ENCODE measurements at regions of chr4 and their contacts with region 1.

Region 1: GRCh38 chr4:94115687-94116086 is 92.0 kb upstream of the SMARCAD1 start:
- DNase-seq: no peak
- H3K4me3 ChIP-seq: no peak overlapping the region
- H3K4me3 Mint-ChIP-seq: no peak overlapping the region
- H3K27ac Mint-ChIP-seq: no peak overlapping the region
- H3K4me1 ChIP-seq: no peaks in the 10 kb centered on the region
- H3K4me1 Mint-ChIP-seq: no peaks in the 10 kb centered on the region
- H3K27me3 ChIP-seq: no peaks in the 10 kb centered on the region
- H3K27me3 Mint-ChIP-seq: peaks cover 4% of the 10 kb centered on the region
- CTCF ChIP-seq: no peak

Region 2: DNA sequence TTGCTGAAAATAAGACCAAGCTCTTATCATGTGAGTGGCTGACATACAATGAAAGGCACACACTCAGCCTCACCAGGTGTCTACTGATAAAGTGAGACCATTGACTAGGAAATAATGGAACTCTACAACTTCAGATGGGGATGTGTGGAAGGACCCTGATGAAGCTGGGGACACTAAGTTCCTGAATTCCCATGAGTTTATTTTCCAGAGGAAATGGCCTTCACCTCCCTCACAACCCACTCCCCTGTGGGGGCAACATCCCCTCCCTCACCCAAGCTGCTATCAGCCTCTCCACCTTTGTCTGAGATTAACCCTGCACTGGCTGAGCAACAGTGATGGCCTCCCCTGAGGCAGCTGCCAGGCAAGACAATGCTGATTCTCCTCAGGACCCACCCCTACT is 36.8 kb after region 1 on chr4:
- CTCF ChIA-PET with region 1: no interaction called
- POLR2A ChIA-PET with region 1: interaction called, 10 read pairs
- intact Hi-C with region 1: no loop called
- DNase-seq: no peak
- H3K4me3 ChIP-seq: no peak overlapping the region
- H3K4me3 Mint-ChIP-seq: no peak overlapping the region
- H3K27ac Mint-ChIP-seq: no peak overlapping the region
- H3K4me1 ChIP-seq: no peaks in the 10 kb centered on the region
- H3K4me1 Mint-ChIP-seq: no peaks in the 10 kb centered on the region
- H3K27me3 ChIP-seq: no peaks in the 10 kb centered on the region
- H3K27me3 Mint-ChIP-seq: no peaks in the 10 kb centered on the region
- CTCF ChIP-seq: no peak

Region 3: GRCh38 chr4:94488662-94489061 is 373.0 kb after region 1 on chr4:
- CTCF ChIA-PET with region 1: no interaction called
- POLR2A ChIA-PET with region 1: no interaction called
- intact Hi-C with region 1: no loop called
- DNase-seq: no peak
- H3K4me3 ChIP-seq: no peak overlapping the region
- H3K4me3 Mint-ChIP-seq: no peak overlapping the region
- H3K27ac Mint-ChIP-seq: no peak overlapping the region
- H3K4me1 ChIP-seq: peaks cover 8% of the 10 kb centered on the region; the same call in 1 of the 2 replicates
- H3K4me1 Mint-ChIP-seq: no peaks in the 10 kb centered on the region
- H3K27me3 ChIP-seq: no peaks in the 10 kb centered on the region
- H3K27me3 Mint-ChIP-seq: no peaks in the 10 kb centered on the region
- CTCF ChIP-seq: no peak